ENCODE measurements at regions of chr11 and their contacts with region 1.

Region 1: GRCh38 chr11:16738193-16738946 is at the start of gene C11orf58:
- DNase-seq: peak; percentile 97
- H3K4me3 Mint-ChIP-seq: no peak within 1 kb of the TSS
- H3K27ac Mint-ChIP-seq: no peak within 1 kb of the TSS
- H3K4me1 Mint-ChIP-seq: peaks cover 22% of the 10 kb centered on the region
- H3K27me3 Mint-ChIP-seq: no peaks in the 10 kb centered on the region
- total RNA-seq, gene C11orf58: 132 to 134 TPM

Region 2: GRCh38 chr11:16713594-16713993 is 24.8 kb before region 1 on chr11:
- CTCF ChIA-PET with region 1: no interaction called
- POLR2A ChIA-PET with region 1: no interaction called
- intact Hi-C with region 1: no loop called
- DNase-seq: no peak
- H3K4me3 Mint-ChIP-seq: no peak overlapping the region
- H3K27ac Mint-ChIP-seq: no peak overlapping the region
- H3K4me1 Mint-ChIP-seq: no peaks in the 10 kb centered on the region
- H3K27me3 Mint-ChIP-seq: peaks cover 3% of the 10 kb centered on the region

Region 3: GRCh38 chr11:16750417-16750816 is 12.0 kb after region 1 on chr11:
- CTCF ChIA-PET with region 1: interaction called, 4 read pairs
- POLR2A ChIA-PET with region 1: interaction called, 28 read pairs
- intact Hi-C with region 1: loop called (anchors 1 kb)
- DNase-seq: no peak
- H3K4me3 Mint-ChIP-seq: no peak overlapping the region
- H3K27ac Mint-ChIP-seq: peak overlapping the region; percentile 80
- H3K4me1 Mint-ChIP-seq: peaks cover 34% of the 10 kb centered on the region
- H3K27me3 Mint-ChIP-seq: no peaks in the 10 kb centered on the region

Region 4: DNA sequence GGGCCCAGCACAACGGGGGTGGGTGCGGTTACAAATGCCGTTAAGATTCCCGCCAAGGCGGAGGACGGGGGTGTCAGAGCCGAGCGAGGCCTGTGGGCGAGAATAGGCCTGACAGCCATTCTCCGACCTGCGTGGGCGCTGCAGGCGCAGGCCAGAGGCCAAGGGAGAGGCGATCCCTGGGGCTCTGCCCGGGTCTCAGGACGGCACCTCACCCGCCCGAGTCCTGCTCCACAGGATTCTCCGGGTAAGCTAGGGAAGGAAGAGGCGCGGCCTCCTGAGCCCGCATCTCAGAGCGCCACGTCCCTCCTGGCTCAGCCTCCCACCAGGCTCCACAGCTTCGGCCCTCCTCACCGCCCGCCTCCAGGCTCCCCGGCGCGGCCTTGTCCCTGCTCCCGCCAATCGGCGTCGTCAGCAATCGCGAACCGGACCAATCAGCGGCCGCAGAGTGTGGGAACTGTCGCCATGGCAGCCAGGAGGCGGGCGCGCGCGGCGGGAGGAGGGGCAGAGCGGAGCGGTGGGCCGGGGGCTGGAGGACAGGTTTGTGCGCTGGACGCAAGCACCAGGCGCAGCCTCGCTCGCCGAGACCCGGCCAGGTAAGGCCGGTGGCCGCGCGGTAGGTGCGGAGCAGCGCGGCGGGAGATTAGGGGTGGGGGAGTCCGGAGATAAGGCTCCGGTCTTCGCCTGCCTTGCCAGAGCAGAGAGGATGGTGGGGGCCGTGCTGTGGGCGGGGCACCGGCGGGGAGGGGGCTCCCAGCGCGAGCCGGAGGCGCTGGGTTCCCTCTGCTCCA is 538.1 kb after region 1 on chr11 and contains the start of gene NUCB2:
- CTCF ChIA-PET with region 1: no interaction called
- POLR2A ChIA-PET with region 1: no interaction called
- intact Hi-C with region 1: loop called (anchors 1 kb)
- DNase-seq: peak; percentile 97
- H3K4me3 Mint-ChIP-seq: peak within 1 kb of the TSS; percentile 89
- H3K27ac Mint-ChIP-seq: peak within 1 kb of the TSS; percentile 87
- H3K4me1 Mint-ChIP-seq: peaks cover 32% of the 10 kb centered on the region
- H3K27me3 Mint-ChIP-seq: no peaks in the 10 kb centered on the region
- total RNA-seq, gene NUCB2: 38.1 to 38.2 TPM

Measured in activated CD4-positive, alpha-beta memory T cell treated with anti-CD3 and anti-CD28 coated beads for 36 hours (primary cell).